ENCODE measurements at regions of chr21 and their contacts with region 1.

Region 1: GRCh38 chr21:38219049-38219628 is 37.7 kb upstream of the KCNJ15 start:
- DNase-seq: peak; percentile 89
- H3K4me3 Mint-ChIP-seq: no peak overlapping the region
- H3K27ac Mint-ChIP-seq: no peak overlapping the region
- H3K4me1 Mint-ChIP-seq: peaks cover 3% of the 10 kb centered on the region
- H3K27me3 Mint-ChIP-seq: no peaks in the 10 kb centered on the region

Region 2: GRCh38 chr21:38159355-38159754 is 59.8 kb before region 1 on chr21:
- intact Hi-C with region 1: loop called (anchors 2 kb)
- DNase-seq: peak; percentile 84
- H3K4me3 Mint-ChIP-seq: no peak overlapping the region
- H3K27ac Mint-ChIP-seq: no peak overlapping the region
- H3K4me1 Mint-ChIP-seq: peaks cover 2% of the 10 kb centered on the region
- H3K27me3 Mint-ChIP-seq: peaks cover 15% of the 10 kb centered on the region

Region 3: DNA sequence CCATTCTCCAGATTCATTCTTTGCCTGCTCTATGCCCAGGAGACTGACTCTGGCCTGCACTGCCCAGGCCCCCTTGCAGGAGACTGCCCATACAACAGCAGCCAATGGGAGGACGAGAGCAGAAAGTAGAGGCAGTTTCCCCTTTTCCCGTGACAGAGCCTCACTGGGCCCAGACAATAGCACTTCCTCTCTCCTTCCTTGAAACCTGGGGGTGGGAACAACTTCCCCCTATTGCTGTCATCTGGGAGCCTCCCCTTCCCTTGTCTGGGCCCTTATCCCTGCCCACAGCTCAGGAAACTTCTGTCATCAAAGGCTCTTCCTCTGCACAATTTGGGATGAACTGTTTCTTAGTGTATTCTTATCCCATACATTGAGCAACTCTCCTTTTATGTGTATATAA is 23.1 kb before region 1 on chr21:
- intact Hi-C with region 1: no loop called
- DNase-seq: no peak
- H3K4me3 Mint-ChIP-seq: no peak overlapping the region
- H3K27ac Mint-ChIP-seq: no peak overlapping the region
- H3K4me1 Mint-ChIP-seq: no peaks in the 10 kb centered on the region
- H3K27me3 Mint-ChIP-seq: peaks cover 24% of the 10 kb centered on the region

Region 4: GRCh38 chr21:38206646-38207045 is 12.5 kb before region 1 on chr21:
- intact Hi-C with region 1: no loop called
- DNase-seq: peak; percentile 42
- H3K4me3 Mint-ChIP-seq: no peak overlapping the region
- H3K27ac Mint-ChIP-seq: no peak overlapping the region
- H3K4me1 Mint-ChIP-seq: no peaks in the 10 kb centered on the region
- H3K27me3 Mint-ChIP-seq: peaks cover 25% of the 10 kb centered on the region

Region 5: DNA sequence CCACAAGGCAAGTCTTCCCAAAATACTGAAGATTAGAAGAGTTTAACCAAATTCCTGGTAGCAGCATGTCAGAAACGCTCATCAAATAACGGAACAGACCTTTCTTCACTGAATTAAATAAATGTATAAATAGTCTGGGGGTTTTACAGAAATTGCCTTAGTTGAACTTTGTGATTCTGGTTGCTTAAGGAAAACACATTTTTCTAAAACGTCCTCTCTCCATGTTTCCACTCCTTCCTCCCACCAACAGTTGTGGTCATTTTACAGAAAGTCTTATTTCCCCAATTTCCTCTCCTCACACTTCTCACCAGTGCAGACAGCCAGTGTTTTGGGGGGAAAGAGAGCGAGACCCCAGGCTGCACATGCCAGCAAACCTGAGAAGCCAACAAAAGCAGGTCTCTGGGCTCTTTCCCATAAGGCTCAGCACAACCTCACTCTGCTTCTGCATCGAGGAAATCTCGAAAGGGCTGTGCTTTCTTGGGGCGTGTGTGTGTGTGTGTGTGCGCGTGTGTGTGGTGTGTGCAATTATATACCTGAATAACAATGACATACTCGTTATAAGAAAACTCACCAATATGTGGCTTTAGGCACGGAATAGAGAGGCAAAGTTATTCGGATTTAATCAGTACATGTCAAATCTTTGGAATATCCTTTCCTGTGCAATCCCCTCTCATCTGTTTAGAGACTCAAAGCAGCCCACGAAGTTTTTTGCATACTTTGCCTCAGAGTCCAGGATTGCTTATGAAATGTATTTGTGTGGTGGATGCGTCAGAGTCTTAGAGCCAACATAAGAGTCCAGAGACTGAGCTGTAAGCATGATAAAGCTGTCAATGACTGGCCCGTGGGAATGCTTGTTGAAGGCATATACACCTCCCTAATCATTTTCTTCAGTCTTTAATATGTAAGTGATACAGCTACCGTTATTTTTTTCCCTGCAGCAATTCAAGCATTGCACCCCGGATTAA is 39.7 kb after region 1 on chr21:
- intact Hi-C with region 1: no loop called
- DNase-seq: no peak
- H3K4me3 Mint-ChIP-seq: no peak overlapping the region
- H3K27ac Mint-ChIP-seq: no peak overlapping the region
- H3K4me1 Mint-ChIP-seq: peaks cover 2% of the 10 kb centered on the region
- H3K27me3 Mint-ChIP-seq: peaks cover 34% of the 10 kb centered on the region

Measured in activated CD4-positive, alpha-beta T cell treated with anti-CD3 and anti-CD28 coated beads, Interleukin-2, amount 10 ng/mL, durations not matched to agents 24 days and 14 days (primary cell).